Activated T-helper 1 cell treated with anti-CD3 and anti-CD28 coated beads, Interleukin-12 subunit alpha, Interleukin-12 subunit beta, Interleukin-2, Interleukin-4 antibody, amounts not matched to agents 30 ng/mL and 10 ng/mL and 1 ng/mL, durations not matched to agents 14 hours and 24 hours and 36 hours (primary cell): ENCODE measurements at regions of chr1 and their contacts with region 1.

Region 1: DNA sequence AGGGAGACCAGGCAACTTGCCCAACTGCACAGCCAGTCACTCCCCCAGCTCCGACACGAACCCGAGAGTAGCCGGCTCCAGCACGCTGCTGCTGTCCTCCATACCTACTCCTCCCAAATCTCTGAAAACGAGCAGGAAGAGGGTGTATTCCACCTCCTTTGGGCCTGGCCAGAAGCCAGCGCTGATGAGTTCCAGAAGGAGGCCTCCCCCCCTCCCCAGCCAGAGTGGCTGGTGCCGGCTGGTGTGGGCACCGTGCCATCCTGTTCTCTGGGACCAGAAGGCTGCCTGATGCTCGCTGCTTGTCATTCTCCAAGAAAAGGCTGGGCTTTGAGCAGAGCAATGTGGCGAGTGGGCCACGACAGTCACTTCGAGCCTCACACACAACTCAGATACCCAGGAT is 22.2 kb downstream of the KCNN3 start:
- DNase-seq: no peak
- H3K4me3 Mint-ChIP-seq: no peak overlapping the region
- H3K27ac Mint-ChIP-seq: no peak overlapping the region
- H3K4me1 Mint-ChIP-seq: peaks cover 18% of the 10 kb centered on the region
- H3K27me3 Mint-ChIP-seq: peaks cover 10% of the 10 kb centered on the region

Region 2: DNA sequence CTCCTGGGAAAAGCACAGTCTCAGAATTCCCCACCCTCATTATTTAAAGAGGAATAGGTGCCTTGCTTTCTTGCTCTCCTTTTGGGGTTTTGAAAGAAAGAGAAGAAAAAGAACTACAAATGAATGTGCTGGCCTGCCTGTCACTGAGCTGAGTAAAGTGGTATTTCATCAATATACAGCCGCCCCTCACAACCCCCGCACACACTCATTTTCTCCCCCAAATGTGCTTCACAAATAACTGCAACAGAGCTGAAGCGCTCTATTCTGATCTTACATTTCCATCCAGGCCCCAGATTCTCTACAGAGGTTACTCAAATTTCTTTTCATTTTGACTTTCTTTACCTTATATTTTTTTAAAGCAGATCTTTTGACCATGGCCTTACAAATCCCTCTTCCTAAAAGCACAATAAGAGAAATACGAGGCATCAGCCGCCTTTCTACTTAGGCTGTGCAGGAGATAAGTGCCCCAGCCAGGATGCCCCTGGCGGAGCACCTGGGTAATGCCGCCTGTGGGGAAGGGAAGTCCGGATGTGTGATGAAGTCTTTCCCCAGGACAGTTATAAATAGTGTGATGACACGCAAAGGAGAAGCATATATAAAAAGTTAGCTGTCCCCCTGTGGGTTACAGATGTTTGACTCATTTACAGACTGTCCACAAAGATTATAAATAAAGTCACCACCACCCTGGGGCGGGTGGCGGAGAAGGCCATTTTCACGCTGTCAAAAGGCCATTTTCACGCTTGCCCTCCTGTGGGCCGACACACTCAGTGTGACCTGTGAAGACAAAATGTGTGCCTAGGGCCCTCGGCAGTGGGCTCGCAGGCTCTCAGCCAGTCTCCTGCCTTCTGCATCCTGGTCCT is 15.7 kb after region 1 on chr1:
- intact Hi-C with region 1: loop called (anchors 2 kb)
- DNase-seq: no peak
- H3K4me3 Mint-ChIP-seq: no peak overlapping the region
- H3K27ac Mint-ChIP-seq: no peak overlapping the region
- H3K4me1 Mint-ChIP-seq: peaks cover 20% of the 10 kb centered on the region
- H3K27me3 Mint-ChIP-seq: peaks cover 17% of the 10 kb centered on the region